ENCODE measurements at regions of chr2 and their contacts with region 1.

Region 1: DNA sequence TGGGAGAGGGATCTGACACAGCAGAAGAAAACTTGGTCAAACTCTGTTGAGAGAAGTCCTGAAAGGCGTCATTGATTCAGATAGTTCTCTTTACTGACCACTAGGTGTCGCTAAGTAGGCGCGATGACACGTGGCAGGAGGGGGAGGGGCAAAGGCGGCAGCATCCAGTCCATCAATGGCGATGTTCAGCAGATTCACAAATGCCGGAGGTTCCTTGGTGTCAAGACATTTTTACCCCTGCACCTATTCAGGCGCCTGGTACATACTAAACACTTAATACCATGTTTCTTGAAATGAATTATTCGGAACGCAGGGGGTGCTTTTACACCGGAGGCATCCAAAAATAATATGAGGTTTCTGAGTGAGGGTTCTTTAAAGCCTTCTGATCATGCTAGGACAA is 3.0 kb upstream of the PLEK start:
- DNase-seq: peak; percentile 91
- ATAC-seq: peak; percentile 74
- H3K4me3 ChIP-seq: peak overlapping the region; percentile 14 to 68 (median 42)
- H3K4me3 Mint-ChIP-seq: peak overlapping the region; percentile 97
- H3K27ac ChIP-seq: peak overlapping the region; percentile 89 to 91
- H3K27ac Mint-ChIP-seq: peak overlapping the region; percentile 97
- H3K4me1 ChIP-seq: peaks cover 34 to 46% of the 10 kb centered on the region in 2 donors
- H3K4me1 Mint-ChIP-seq: peaks cover 54% of the 10 kb centered on the region
- H3K27me3 ChIP-seq: no peaks in the 10 kb centered on the region
- H3K27me3 Mint-ChIP-seq: no peaks in the 10 kb centered on the region
- CTCF ChIP-seq: peak; percentile 84

Region 2: GRCh38 chr2:68141875-68142274 is 220.2 kb before region 1 on chr2:
- CTCF ChIA-PET with region 1: no interaction called
- POLR2A ChIA-PET with region 1: no interaction called
- intact Hi-C with region 1: no loop called
- DNase-seq: no peak
- ATAC-seq: no peak
- H3K4me3 ChIP-seq: no peak overlapping the region
- H3K4me3 Mint-ChIP-seq: no peak overlapping the region
- H3K27ac ChIP-seq: no peak overlapping the region
- H3K27ac Mint-ChIP-seq: no peak overlapping the region
- H3K4me1 ChIP-seq: no peaks in the 10 kb centered on the region
- H3K4me1 Mint-ChIP-seq: no peaks in the 10 kb centered on the region
- H3K27me3 ChIP-seq: no peaks in the 10 kb centered on the region
- H3K27me3 Mint-ChIP-seq: no peaks in the 10 kb centered on the region
- CTCF ChIP-seq: no peak

Region 3: DNA sequence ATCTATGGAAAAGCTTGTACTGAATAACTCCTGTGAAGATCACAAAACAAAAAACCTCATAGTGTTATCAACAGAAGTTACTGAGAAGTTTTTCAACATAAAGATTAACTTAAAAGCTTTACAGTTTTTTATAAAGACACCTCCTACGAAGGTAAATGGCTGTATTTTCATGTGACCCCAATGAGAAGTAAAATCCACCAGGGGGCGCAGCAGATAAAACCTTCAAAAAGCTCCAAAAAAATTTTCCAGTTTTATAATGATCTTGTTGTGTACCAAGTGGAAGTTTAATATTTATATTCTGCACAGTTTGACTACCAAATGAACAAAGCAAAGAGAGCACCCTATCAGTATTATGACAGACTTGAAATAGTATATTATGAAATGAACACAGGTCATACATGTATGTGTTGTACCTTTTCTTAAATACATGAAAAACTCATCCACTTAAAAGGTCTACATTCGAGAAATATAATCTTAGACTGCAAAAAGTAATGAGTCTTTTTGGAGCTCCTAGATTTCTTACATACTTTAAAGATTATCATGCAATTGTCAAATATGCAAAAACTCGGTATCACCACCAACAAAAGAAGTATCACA is 165.9 kb before region 1 on chr2:
- CTCF ChIA-PET with region 1: interaction called, 13 read pairs
- POLR2A ChIA-PET with region 1: no interaction called
- intact Hi-C with region 1: loop called (anchors 5 kb)
- DNase-seq: peak; percentile 66
- ATAC-seq: peak; percentile 41
- H3K4me3 ChIP-seq: no peak overlapping the region
- H3K4me3 Mint-ChIP-seq: no peak overlapping the region
- H3K27ac ChIP-seq: peak overlapping the region in 1 of 2 donors; percentile 39
- H3K27ac Mint-ChIP-seq: no peak overlapping the region
- H3K4me1 ChIP-seq: peaks cover 3 to 24% of the 10 kb centered on the region in 2 donors
- H3K4me1 Mint-ChIP-seq: peaks cover 56% of the 10 kb centered on the region
- H3K27me3 ChIP-seq: no peaks in the 10 kb centered on the region
- H3K27me3 Mint-ChIP-seq: no peaks in the 10 kb centered on the region
- CTCF ChIP-seq: peak; percentile 95

Region 4: DNA sequence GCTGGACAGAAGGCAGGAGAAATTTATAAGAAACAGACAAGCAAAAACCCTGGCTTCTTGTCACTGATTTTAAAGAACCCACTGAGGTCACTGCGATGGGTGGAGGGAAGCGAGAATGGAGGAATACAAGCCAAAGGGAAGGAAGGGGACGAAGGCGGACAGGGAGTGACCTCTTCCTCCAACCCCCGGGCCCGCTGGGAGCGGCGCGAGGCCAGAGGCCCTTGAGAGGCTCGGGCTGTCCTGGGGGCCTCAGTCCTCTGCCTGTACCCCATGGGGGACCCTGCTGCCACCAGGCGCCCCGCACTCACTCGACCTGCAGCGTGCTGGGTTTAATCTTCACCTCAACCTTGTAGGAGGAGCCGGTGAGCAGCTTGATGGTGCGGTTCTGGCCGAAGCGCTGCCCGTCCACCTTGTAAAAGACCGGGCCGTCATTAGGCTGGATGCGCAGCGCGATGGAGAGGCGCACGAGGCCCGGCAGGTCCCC is 43.1 kb before region 1 on chr2:
- CTCF ChIA-PET with region 1: no interaction called
- POLR2A ChIA-PET with region 1: no interaction called
- intact Hi-C with region 1: no loop called
- DNase-seq: no peak
- ATAC-seq: no peak
- H3K4me3 ChIP-seq: peak overlapping the region in 4 of 5 experiments; percentile 51 to 63 (median 56)
- H3K4me3 Mint-ChIP-seq: peak overlapping the region; percentile 87
- H3K27ac ChIP-seq: no peak overlapping the region
- H3K27ac Mint-ChIP-seq: no peak overlapping the region
- H3K4me1 ChIP-seq: peaks cover 19 to 20% of the 10 kb centered on the region in 2 donors
- H3K4me1 Mint-ChIP-seq: peaks cover 19% of the 10 kb centered on the region
- H3K27me3 ChIP-seq: peaks cover 0 to 40% (median 27%) of the 10 kb centered on the region in 4 experiments
- H3K27me3 Mint-ChIP-seq: peaks cover 43% of the 10 kb centered on the region
- CTCF ChIP-seq: no peak

Region 5: DNA sequence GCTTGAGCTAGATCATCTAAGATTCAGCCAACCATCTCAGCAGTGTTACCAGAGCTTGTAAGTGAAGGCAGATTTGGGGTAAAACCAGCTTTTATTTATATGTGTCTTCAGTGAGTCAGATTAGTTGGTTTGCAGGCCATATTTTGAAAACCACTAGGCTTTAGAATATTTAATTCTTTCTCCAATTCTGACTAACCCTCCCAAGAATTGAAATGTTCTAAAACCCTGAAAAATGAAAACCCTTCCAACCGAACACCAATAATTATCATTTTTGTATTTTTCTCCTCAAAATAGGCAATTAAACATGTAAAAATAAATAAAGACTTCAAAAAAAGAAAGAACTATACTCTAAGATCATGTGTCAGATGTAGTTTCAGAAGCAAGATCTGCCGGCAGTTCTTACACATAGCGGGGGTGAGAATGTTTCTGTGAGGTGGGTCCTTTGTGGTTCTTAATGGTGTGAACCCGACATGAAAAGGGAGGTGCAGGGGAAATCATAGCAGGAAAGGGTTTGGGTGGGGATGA is 17.2 kb after region 1 on chr2:
- CTCF ChIA-PET with region 1: interaction called, 11 read pairs
- POLR2A ChIA-PET with region 1: interaction called, 6 read pairs
- intact Hi-C with region 1: loop called (anchors 1 kb)
- DNase-seq: no peak
- ATAC-seq: no peak
- H3K4me3 ChIP-seq: no peak overlapping the region
- H3K4me3 Mint-ChIP-seq: peak overlapping the region; percentile 23
- H3K27ac ChIP-seq: peak overlapping the region in 1 of 2 donors; percentile 32
- H3K27ac Mint-ChIP-seq: peak overlapping the region; percentile 79
- H3K4me1 ChIP-seq: peaks cover 69 to 73% of the 10 kb centered on the region in 2 donors
- H3K4me1 Mint-ChIP-seq: peaks cover 83% of the 10 kb centered on the region
- H3K27me3 ChIP-seq: no peaks in the 10 kb centered on the region
- H3K27me3 Mint-ChIP-seq: no peaks in the 10 kb centered on the region
- CTCF ChIP-seq: no peak

Region 6: GRCh38 chr2:68411397-68412126 is 49.5 kb after region 1 on chr2:
- CTCF ChIA-PET with region 1: interaction called, 5 read pairs
- POLR2A ChIA-PET with region 1: no interaction called
- intact Hi-C with region 1: loop called (anchors 1 kb)
- DNase-seq: peak; percentile 79
- ATAC-seq: peak; percentile 97
- H3K4me3 ChIP-seq: peak overlapping the region; percentile 24 to 60 (median 45)
- H3K4me3 Mint-ChIP-seq: peak overlapping the region; percentile 78
- H3K27ac ChIP-seq: peak overlapping the region; percentile 83 to 87
- H3K27ac Mint-ChIP-seq: peak overlapping the region; percentile 83
- H3K4me1 ChIP-seq: peaks cover 59 to 66% of the 10 kb centered on the region in 2 donors
- H3K4me1 Mint-ChIP-seq: peaks cover 91% of the 10 kb centered on the region
- H3K27me3 ChIP-seq: no peaks in the 10 kb centered on the region
- H3K27me3 Mint-ChIP-seq: no peaks in the 10 kb centered on the region
- CTCF ChIP-seq: no peak

Region 7: GRCh38 chr2:68698567-68699377 is 336.7 kb after region 1 on chr2:
- CTCF ChIA-PET with region 1: no interaction called
- POLR2A ChIA-PET with region 1: no interaction called
- intact Hi-C with region 1: no loop called
- DNase-seq: no peak
- ATAC-seq: no peak
- H3K4me3 ChIP-seq: no peak overlapping the region
- H3K4me3 Mint-ChIP-seq: no peak overlapping the region
- H3K27ac ChIP-seq: no peak overlapping the region
- H3K27ac Mint-ChIP-seq: no peak overlapping the region
- H3K4me1 ChIP-seq: no peaks in the 10 kb centered on the region
- H3K4me1 Mint-ChIP-seq: no peaks in the 10 kb centered on the region
- H3K27me3 ChIP-seq: no peaks in the 10 kb centered on the region
- H3K27me3 Mint-ChIP-seq: no peaks in the 10 kb centered on the region
- CTCF ChIP-seq: no peak

Region 8: GRCh38 chr2:68715353-68716041 is 353.4 kb after region 1 on chr2:
- CTCF ChIA-PET with region 1: no interaction called
- POLR2A ChIA-PET with region 1: no interaction called
- intact Hi-C with region 1: loop called (anchors 10 kb)
- DNase-seq: peak; percentile 70
- ATAC-seq: peak; percentile 37
- H3K4me3 ChIP-seq: peak overlapping the region in 1 of 5 experiments; percentile 17
- H3K4me3 Mint-ChIP-seq: peak overlapping the region; percentile 33
- H3K27ac ChIP-seq: peak overlapping the region; percentile 59 to 78
- H3K27ac Mint-ChIP-seq: peak overlapping the region; percentile 83
- H3K4me1 ChIP-seq: peaks cover 45 to 50% of the 10 kb centered on the region in 2 donors
- H3K4me1 Mint-ChIP-seq: peaks cover 69% of the 10 kb centered on the region
- H3K27me3 ChIP-seq: no peaks in the 10 kb centered on the region
- H3K27me3 Mint-ChIP-seq: no peaks in the 10 kb centered on the region
- CTCF ChIP-seq: peak; percentile 57